Cardiac septum (tissue), 1 donor: ENCODE measurements at regions of chr11 and their contacts with region 1.

Region 1: DNA sequence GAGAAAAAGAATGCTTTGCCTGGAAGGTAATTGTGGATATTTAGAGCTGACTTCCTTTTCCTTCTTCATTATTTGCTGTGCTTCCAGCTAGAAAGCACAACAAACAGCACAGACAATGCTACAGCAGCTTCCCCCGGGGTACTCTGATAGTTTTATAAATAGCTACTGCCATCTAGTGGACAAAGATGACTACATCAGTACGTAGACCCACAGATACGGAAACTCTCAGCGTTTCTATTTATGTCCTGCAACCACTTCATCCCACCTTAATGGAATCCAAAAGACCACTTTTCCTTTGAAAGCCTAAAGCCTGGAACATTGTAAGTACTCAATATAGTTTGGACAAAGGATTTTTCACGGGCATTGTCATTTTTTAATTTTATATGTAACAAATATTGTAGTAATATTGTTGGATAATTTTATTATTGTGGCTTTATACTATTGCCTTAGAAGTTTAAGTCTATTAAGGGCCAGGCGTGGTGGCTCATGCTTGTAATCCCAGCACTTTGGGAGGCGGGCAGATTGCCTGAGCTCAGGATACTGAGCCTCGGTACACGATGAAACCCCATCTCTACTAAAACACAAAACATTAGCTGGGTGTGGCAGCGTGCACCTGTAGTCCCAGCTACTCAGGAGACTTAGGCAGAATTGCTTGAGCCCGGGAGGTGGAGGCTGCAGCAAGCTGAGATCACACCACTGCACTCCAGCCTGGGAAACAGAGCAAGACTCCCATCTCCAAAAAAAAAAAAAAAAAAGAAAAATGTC is 7.5 kb downstream of the HSPA8 start:
- DNase-seq: no peak

Region 2: DNA sequence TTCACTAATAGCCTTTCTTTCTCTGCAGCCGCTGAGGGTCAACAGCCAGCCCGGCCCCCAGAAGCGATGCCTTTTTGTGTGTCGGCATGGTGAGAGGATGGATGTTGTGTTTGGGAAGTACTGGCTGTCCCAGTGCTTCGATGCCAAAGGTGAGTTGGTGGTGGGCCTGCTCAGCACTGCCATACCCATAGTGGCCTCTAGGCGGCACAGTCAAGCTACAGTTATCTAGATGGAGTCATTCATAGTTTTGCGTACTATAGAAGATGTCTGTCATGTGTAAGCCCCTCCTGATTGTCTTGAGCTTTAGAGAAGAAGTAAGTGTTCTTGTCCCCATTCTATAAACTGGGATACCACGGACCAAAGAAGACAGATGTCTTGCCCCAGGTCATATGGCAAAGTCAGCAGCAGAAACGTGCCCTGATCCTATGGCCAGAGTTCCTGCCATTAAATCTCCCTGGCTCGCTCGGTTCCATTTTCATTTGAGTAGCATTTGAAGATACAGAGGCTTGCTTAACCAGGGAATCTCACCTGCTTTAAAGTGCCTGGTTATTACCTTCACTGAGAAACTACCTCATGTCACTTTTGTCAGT is 258.3 kb before region 1 on chr11:
- intact Hi-C with region 1: no loop called
- DNase-seq: no peak

Region 3: DNA sequence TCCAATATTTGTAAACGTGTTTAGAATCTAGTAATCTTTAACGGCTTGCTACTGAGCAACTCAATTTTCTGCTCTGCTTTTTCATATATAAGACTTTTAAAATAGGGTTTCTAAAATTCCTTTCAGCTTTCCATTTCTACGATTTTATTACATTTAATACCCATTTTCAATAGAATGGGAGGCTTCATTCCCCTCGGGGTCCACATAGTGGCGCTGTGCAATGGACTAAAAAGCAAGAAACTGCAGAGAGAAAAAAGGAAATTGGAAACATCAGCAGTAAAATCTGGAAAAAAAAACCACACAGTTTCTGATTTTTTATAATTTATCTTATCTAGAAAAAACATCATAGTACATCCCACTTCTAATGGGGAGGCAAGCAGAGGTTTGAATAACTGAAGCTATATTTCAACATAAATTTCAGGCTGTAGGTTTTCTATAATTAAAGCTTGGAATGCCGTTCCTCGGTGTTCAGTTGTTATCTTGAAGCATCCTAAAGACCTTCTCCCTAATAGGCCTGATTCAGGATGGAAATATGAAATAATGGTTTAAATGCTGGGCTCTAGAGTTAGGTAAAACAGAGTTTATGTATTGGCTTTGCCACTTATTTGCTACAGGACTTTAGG is 190.7 kb before region 1 on chr11:
- intact Hi-C with region 1: loop called (anchors 5 kb)
- DNase-seq: no peak